A549 (cell line): ENCODE measurements at regions of chr5 and their contacts with region 1.

Region 1: GRCh38 chr5:43019614-43020293 is 20.4 kb downstream of the ANXA2R start:
- DNase-seq: peak; percentile 51 to 88
- ATAC-seq: peak; percentile 68
- H3K4me3 ChIP-seq: peak overlapping the region; percentile 55
- H3K27ac ChIP-seq: peak overlapping the region; percentile 90 to 96
- H3K4me1 ChIP-seq: peaks cover 24% of the 10 kb centered on the region
- CTCF ChIP-seq: no peak
- EP300 ChIP-seq: no peak
- POLR2A ChIP-seq: no peak
- RAD21 ChIP-seq: no peak

Region 2: DNA sequence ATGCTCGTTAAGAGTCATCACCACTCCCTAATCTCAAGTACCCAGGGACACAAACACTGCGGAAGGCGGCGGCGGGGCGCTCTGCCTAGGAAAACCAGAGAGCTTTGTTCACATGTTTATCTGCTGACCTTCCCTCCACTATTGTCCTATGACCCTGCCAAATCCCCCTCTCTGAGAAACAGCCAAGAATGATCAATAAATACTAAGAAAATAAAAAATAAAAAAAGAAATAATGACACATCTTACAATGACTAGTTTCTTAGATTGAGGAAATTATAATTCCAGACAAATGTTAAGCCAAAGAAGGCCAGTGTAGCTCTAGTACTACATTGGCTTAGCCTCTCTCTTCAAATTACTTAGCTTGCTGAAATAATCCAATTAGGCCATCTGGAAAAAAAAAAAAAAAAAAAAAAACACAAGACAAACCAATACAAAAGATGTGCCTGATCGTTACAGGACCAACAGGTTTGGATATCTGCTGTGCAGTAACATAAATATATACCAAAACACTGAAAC is 37.6 kb before region 1 on chr5:
- CTCF ChIA-PET with region 1: no interaction called
- POLR2A ChIA-PET with region 1: no interaction called
- DNase-seq: peak in 1 of 2 experiments; percentile 79
- ATAC-seq: peak in 1 of 2 experiments; percentile 21; a peak in 2 of 6 replicates
- H3K4me3 ChIP-seq: no peak overlapping the region
- H3K27ac ChIP-seq: peak overlapping the region; percentile 77 to 85
- H3K4me1 ChIP-seq: peaks cover 45% of the 10 kb centered on the region
- CTCF ChIP-seq: no peak
- EP300 ChIP-seq: no peak
- POLR2A ChIP-seq: no peak
- RAD21 ChIP-seq: no peak

Region 3: DNA sequence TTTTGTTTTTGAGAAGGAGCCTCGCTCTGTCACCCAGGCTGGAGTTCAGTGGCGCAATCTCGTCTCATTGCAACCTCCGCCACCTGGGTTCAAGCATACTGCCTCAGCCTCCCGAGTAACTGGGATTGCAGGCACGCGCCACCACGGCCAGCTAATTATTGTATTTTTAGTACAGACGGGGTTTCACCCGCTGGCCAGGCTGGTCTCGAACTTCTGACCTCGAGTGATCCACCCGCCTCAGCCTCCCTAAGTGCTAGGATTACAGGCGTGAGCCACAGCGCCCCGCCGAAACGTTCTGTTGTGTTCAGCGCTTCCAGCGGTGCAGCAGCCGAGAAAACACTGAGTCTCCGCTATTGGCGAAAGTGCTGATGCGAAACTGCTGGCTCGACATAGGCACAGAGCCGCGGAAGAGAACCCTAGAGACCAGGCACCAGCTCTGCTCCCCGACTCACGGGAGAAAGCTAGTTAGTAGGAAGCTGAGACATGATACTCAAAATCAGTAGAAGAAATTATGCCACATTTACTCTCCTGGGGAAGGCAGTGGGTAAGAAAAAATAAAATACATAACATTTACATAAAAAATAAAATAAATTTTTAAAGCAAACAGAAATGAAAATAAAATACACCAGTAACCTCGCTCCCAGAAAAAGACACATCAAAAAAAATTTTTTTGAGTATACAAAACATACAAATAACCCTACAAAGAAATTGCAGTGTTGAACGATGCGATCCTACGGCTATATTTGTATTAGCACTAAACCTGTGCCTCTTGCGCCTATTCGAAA is 11.2 kb before region 1 on chr5:
- CTCF ChIA-PET with region 1: interaction called, 39 read pairs
- POLR2A ChIA-PET with region 1: interaction called, 78 read pairs
- DNase-seq: peak; percentile 84 to 98
- ATAC-seq: peak; percentile 81 to 85
- H3K4me3 ChIP-seq: peak overlapping the region; percentile 56
- H3K27ac ChIP-seq: peak overlapping the region; percentile 93 to 95
- H3K4me1 ChIP-seq: peaks cover 13% of the 10 kb centered on the region
- CTCF ChIP-seq: peak; percentile 34
- EP300 ChIP-seq: no peak
- POLR2A ChIP-seq: peak; percentile 64
- RAD21 ChIP-seq: peak in 1 of 2 experiments; percentile 34; a peak in 3 of 5 replicates

Region 4: DNA sequence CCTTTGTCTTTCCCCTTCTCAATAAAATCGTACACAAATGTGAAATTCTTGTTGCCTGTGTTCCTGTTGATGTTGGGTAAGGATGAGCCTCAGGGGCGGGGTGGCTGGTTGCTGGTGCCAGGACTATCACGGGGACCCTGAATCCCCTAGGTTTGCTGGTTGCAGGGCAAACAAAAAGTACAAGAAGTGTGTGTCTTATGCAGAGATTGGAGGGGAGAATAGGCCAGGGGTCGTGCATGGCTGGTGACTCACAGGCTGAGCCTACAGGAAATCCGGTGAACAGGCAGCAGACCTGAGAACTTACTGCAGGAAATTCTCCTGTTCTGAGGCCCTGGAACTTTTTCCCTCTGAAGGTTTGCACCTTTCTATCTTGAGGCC is 14.8 kb after region 1 on chr5:
- CTCF ChIA-PET with region 1: interaction called, 34 read pairs
- POLR2A ChIA-PET with region 1: interaction called, 4 read pairs
- DNase-seq: no peak
- ATAC-seq: no peak
- H3K4me3 ChIP-seq: no peak overlapping the region
- H3K27ac ChIP-seq: no peak overlapping the region
- H3K4me1 ChIP-seq: peaks cover 11% of the 10 kb centered on the region; the same call in 2 of the 3 replicates
- CTCF ChIP-seq: no peak
- EP300 ChIP-seq: no peak
- POLR2A ChIP-seq: no peak
- RAD21 ChIP-seq: no peak

Region 5: DNA sequence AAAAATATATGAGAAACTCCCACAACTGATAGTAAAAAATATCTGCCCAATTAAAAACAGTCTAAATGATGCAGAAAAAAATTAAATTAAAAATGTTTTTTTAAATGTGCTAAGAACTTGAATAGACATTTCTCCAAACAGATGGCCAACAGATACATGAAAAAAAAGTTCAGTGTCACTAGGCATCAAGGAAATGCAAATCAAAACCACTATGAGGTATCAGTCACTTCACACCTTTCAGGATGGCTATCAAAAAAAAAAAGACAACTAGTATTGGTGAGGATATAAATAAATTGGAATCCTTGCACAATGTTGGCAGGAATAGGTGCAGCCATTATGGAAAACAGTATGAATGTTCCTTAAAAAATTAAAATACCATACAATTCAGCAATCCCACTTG is 117.6 kb after region 1 on chr5:
- CTCF ChIA-PET with region 1: no interaction called
- POLR2A ChIA-PET with region 1: no interaction called
- DNase-seq: no peak
- ATAC-seq: no peak
- H3K4me3 ChIP-seq: no peak overlapping the region
- H3K27ac ChIP-seq: no peak overlapping the region
- H3K4me1 ChIP-seq: no peaks in the 10 kb centered on the region
- CTCF ChIP-seq: no peak
- EP300 ChIP-seq: no peak
- POLR2A ChIP-seq: no peak
- RAD21 ChIP-seq: no peak